ENCODE measurements at regions of chr4 and their contacts with region 1.

Region 1: GRCh38 chr4:83484500-83485461 is at the start of gene ABRAXAS1:
- DNase-seq: peak; percentile 96
- ATAC-seq: peak; percentile 97
- H3K4me3 Mint-ChIP-seq: peak within 1 kb of the TSS; percentile 93
- H3K27ac Mint-ChIP-seq: peak within 1 kb of the TSS; percentile 94
- H3K4me1 Mint-ChIP-seq: peaks cover 19% of the 10 kb centered on the region
- H3K27me3 Mint-ChIP-seq: no peaks in the 10 kb centered on the region
- CTCF ChIP-seq: no peak
- total RNA-seq, gene ABRAXAS1: 23.5 and 24.2 TPM in 2 replicates

Region 2: DNA sequence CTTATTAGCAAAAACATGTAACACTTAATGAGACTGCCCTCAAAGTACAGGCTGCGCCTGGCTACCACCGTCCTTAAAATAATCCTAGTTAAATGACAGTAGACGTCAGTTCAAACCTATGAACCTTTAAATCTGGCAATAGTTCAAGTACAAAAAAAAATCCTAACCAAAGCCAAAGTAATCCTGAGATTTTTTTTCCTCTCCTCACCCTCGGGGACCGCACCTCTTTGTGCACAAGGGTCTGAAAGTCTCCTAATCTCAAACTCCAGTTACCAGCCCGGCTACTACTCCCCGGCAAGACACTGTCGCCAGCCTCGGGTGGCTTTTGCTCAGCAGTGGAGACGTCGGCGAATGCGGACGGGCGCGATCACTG is 594.3 kb before region 1 on chr4:
- CTCF ChIA-PET with region 1: no interaction called
- POLR2A ChIA-PET with region 1: no interaction called
- intact Hi-C with region 1: no loop called
- DNase-seq: no peak
- ATAC-seq: no peak
- H3K4me3 Mint-ChIP-seq: peak overlapping the region; percentile 93
- H3K27ac Mint-ChIP-seq: peak overlapping the region; percentile 94
- H3K4me1 Mint-ChIP-seq: peaks cover 40% of the 10 kb centered on the region
- H3K27me3 Mint-ChIP-seq: no peaks in the 10 kb centered on the region
- CTCF ChIP-seq: no peak

Region 3: DNA sequence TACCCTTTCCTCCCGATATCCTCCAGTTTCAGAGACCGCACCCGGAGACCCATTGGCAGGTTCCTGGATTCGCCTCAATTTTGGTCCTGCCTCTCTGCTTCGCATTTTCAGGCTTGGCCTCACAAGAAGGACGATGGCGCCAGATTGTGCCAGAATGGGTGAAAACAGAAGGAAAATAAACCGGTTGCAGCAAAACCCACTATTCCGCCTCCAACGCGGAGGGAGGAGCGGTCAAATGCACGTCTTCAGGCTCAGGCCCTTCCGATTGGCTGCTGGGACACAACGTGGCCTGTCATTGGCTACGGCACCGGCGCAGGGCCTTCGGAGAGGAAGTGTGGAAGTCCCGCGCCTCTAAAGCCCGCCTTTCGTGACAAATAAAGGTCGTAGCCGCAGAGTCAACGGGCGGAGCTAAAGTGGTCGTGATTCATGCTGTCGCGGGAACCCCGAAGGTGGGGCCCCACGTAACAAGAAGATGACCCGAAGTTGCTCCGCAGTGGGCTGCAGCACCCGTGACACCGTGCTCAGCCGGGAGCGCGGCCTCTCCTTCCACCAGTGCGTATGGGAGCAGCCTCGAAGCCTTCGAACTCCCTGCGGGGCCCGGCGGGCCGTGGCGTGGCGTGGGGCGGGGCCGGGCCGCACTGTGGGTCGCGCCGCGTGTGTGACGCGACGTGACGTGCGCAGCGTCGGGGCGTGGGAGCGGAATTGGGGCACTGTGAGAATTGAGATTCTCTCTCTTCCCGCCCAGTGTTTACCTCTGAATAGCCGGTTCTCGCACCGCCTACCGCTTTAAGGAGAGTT is 584.3 kb before region 1 on chr4 and contains the start of gene THAP9:
- CTCF ChIA-PET with region 1: no interaction called
- POLR2A ChIA-PET with region 1: no interaction called
- intact Hi-C with region 1: loop called (anchors 2 kb)
- DNase-seq: peak; percentile 92
- ATAC-seq: peak; percentile 90
- H3K4me3 Mint-ChIP-seq: no peak within 1 kb of the TSS
- H3K27ac Mint-ChIP-seq: no peak within 1 kb of the TSS
- H3K4me1 Mint-ChIP-seq: peaks cover 20% of the 10 kb centered on the region
- H3K27me3 Mint-ChIP-seq: no peaks in the 10 kb centered on the region
- CTCF ChIP-seq: no peak
- total RNA-seq, gene THAP9: 2.1 and 3.1 TPM in 2 replicates

Region 4: GRCh38 chr4:82968972-82969371 is 515.8 kb before region 1 on chr4:
- CTCF ChIA-PET with region 1: no interaction called
- POLR2A ChIA-PET with region 1: no interaction called
- intact Hi-C with region 1: no loop called
- DNase-seq: no peak
- ATAC-seq: no peak
- H3K4me3 Mint-ChIP-seq: no peak overlapping the region
- H3K27ac Mint-ChIP-seq: no peak overlapping the region
- H3K4me1 Mint-ChIP-seq: peaks cover 11% of the 10 kb centered on the region
- H3K27me3 Mint-ChIP-seq: no peaks in the 10 kb centered on the region
- CTCF ChIP-seq: no peak

Region 5: DNA sequence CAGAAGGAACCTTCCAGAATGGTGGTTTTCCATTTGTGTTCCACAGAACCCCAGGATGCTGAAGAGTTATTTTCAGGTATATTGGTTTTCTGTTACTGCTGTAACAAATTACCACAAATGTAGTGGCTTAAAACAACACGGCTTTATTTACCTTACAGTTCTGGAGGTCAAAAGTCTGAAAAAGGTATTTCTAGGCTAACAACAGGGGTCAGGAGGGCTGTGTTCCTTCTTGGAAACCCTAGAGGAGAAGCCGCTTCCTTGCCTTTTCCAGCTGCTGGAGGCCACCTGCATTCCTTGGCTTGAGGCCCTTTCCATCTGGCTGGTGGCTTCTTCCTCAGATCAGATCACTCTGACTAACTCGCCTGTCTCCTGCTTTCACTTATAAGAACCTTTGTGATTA is 92.2 kb before region 1 on chr4:
- CTCF ChIA-PET with region 1: no interaction called
- POLR2A ChIA-PET with region 1: no interaction called
- intact Hi-C with region 1: no loop called
- DNase-seq: no peak
- ATAC-seq: no peak
- H3K4me3 Mint-ChIP-seq: no peak overlapping the region
- H3K27ac Mint-ChIP-seq: no peak overlapping the region
- H3K4me1 Mint-ChIP-seq: peaks cover 23% of the 10 kb centered on the region
- H3K27me3 Mint-ChIP-seq: no peaks in the 10 kb centered on the region
- CTCF ChIP-seq: no peak

Region 6: GRCh38 chr4:83535520-83536361 is 51.0 kb after region 1 on chr4 and contains the start of gene GPAT3:
- CTCF ChIA-PET with region 1: no interaction called
- POLR2A ChIA-PET with region 1: interaction called, 6 read pairs
- intact Hi-C with region 1: loop called (anchors 2 kb)
- DNase-seq: peak; percentile 54
- ATAC-seq: peak; percentile 80
- H3K4me3 Mint-ChIP-seq: peak within 1 kb of the TSS; percentile 88
- H3K27ac Mint-ChIP-seq: peak within 1 kb of the TSS; percentile 68
- H3K4me1 Mint-ChIP-seq: peaks cover 16% of the 10 kb centered on the region
- H3K27me3 Mint-ChIP-seq: peaks cover 43% of the 10 kb centered on the region
- CTCF ChIP-seq: no peak
- total RNA-seq, gene GPAT3: 0.76 and 0.91 TPM in 2 replicates

Measured in activated B cell treated with CpG ODN at 0.5 μM for 24 hours (primary cell).